Activated CD4-positive, alpha-beta memory T cell treated with anti-CD3 and anti-CD28 coated beads for 36 hours (primary cell): ENCODE measurements at regions of chr3 and their contacts with region 1.

Region 1: GRCh38 chr3:168040607-168041208 is 55.0 kb downstream of the GOLIM4 start:
- DNase-seq: no peak
- H3K4me3 Mint-ChIP-seq: no peak overlapping the region
- H3K27ac Mint-ChIP-seq: no peak overlapping the region
- H3K4me1 Mint-ChIP-seq: no peaks in the 10 kb centered on the region
- H3K27me3 Mint-ChIP-seq: no peaks in the 10 kb centered on the region

Region 2: GRCh38 chr3:167928381-167928780 is 112.3 kb before region 1 on chr3:
- CTCF ChIA-PET with region 1: interaction called, 3 read pairs
- POLR2A ChIA-PET with region 1: no interaction called
- intact Hi-C with region 1: loop called (anchors 1 kb)
- DNase-seq: no peak
- H3K4me3 Mint-ChIP-seq: no peak overlapping the region
- H3K27ac Mint-ChIP-seq: no peak overlapping the region
- H3K4me1 Mint-ChIP-seq: no peaks in the 10 kb centered on the region
- H3K27me3 Mint-ChIP-seq: no peaks in the 10 kb centered on the region

Region 3: DNA sequence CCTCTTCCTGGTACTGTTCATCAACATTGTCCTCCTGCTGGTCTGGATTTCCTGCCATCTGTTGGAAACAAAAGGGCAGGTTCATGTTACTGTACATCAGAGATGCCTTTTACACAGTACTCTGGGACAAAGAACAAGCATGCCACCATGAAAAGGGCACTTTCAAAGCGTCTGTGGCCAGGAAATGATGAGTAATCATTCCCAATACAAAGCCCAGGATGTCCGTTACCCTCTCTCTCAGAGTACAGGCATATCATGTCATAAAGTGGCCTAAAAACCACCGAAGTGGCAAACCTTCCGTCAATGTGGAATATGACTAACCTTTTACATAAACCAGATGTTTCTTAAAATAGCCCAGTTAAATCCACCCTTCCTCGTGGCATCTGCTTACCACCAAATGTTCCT is 16.2 kb before region 1 on chr3:
- CTCF ChIA-PET with region 1: no interaction called
- POLR2A ChIA-PET with region 1: no interaction called
- intact Hi-C with region 1: no loop called
- DNase-seq: peak; percentile 24
- H3K4me3 Mint-ChIP-seq: no peak overlapping the region
- H3K27ac Mint-ChIP-seq: peak overlapping the region; percentile 10
- H3K4me1 Mint-ChIP-seq: peaks cover 12% of the 10 kb centered on the region
- H3K27me3 Mint-ChIP-seq: peaks cover 4% of the 10 kb centered on the region